Vagina (tissue), 2 donors: ENCODE measurements at regions of chr12 and their contacts with region 1.

Region 1: GRCh38 chr12:31393004-31393550 is 67.1 kb upstream of the SINHCAF start:
- DNase-seq: no peak
- H3K4me3 ChIP-seq: no peak overlapping the region
- H3K27ac ChIP-seq: no peak overlapping the region
- H3K4me1 ChIP-seq: no peaks in the 10 kb centered on the region
- H3K27me3 ChIP-seq: no peaks in the 10 kb centered on the region
- CTCF ChIP-seq: no peak
- POLR2A ChIP-seq: no peak

Region 2: DNA sequence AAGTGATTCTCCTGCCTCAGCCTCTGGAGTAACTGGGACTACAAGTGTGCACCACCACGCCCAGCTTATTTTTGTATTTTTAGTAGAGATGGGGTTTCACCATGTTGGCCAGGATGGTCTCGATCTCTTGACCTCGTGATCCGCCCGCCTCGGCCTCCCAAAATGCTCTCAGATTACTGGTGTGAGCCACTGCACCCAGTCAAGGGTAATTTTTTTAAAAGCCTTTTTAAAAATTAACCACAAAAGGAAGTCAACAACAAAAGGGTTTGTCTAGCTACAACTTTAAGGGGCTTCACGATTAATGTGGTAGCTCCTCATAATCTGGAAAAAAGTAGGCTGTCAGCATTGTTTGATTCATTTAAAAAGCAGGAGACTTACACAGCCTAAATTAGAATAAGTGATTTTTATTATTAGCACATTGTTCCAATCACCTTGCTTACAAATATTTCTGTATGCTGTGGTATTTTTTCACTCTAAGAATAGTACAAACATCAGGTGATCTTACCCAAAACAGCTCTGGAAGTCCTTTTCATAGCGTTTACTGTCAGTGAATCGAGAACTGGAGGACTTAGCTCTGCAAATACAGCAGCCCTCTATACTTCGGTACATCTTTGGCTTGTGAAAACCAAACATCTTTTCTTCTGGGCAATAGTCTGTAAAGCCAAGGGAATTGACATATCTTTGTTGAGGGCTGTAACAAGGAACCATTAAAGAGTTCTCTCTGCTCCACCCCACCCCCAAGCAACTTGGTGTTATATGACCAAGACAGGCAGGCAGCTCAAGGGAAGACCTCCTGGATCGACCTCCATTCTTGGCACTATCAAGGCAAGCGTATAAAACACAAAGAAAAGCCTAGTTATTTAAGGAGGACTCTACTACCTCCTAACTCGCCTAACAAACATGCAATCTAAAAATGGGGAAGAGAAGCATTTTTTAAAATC is 95.2 kb before region 1 on chr12:
- intact Hi-C with region 1: no loop called
- DNase-seq: no peak
- H3K4me3 ChIP-seq: no peak overlapping the region
- H3K27ac ChIP-seq: no peak overlapping the region
- H3K4me1 ChIP-seq: no peaks in the 10 kb centered on the region
- H3K27me3 ChIP-seq: no peaks in the 10 kb centered on the region
- CTCF ChIP-seq: no peak
- POLR2A ChIP-seq: no peak

Region 3: GRCh38 chr12:31423405-31423804 is 30.3 kb after region 1 on chr12:
- intact Hi-C with region 1: loop called (anchors 2 kb)
- DNase-seq: no peak
- H3K4me3 ChIP-seq: no peak overlapping the region
- H3K27ac ChIP-seq: no peak overlapping the region
- H3K4me1 ChIP-seq: no peaks in the 10 kb centered on the region
- H3K27me3 ChIP-seq: no peaks in the 10 kb centered on the region
- CTCF ChIP-seq: no peak
- POLR2A ChIP-seq: no peak